Activated T-helper 2 cell treated with anti-CD3 and anti-CD28 coated beads, Interferon-gamma antibody, Interleukin-2, Interleukin-4, amounts not matched to agents 10 μg/mL and 5 μg/mL and 100 μg/mL, durations not matched to agents 14 hours and 24 hours and 36 hours (primary cell): ENCODE measurements at regions of chr14 and their contacts with region 1.

Region 1: GRCh38 chr14:55373784-55374705 is 37.6 kb downstream of the ATG14 start:
- DNase-seq: peak; percentile 22
- H3K4me3 Mint-ChIP-seq: peak overlapping the region; percentile 44
- H3K27ac Mint-ChIP-seq: peak overlapping the region; percentile 95
- H3K4me1 Mint-ChIP-seq: peaks cover 25% of the 10 kb centered on the region
- H3K27me3 Mint-ChIP-seq: no peaks in the 10 kb centered on the region

Region 2: DNA sequence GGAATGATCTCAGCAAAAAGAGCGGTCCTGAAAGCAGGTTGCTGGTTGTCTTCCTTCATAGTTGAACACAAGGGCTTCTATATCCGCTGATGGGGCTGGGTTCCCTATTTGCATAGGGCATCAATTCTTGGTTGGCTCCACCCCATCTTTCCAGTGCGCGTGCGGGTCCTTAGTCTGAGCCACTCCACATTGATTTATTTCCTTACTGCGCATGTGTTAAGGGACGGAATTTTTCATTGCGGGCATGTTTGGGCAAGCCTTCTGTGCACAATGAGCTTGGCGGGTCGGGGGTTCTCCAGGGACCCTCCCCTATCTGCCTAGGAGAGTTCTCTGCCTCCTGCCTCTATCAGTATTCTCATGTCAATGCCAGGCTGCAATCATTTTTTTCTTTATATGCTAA is 161.4 kb before region 1 on chr14:
- intact Hi-C with region 1: loop called (anchors 5 kb)
- DNase-seq: no peak
- H3K4me3 Mint-ChIP-seq: no peak overlapping the region
- H3K27ac Mint-ChIP-seq: no peak overlapping the region
- H3K4me1 Mint-ChIP-seq: peaks cover 5% of the 10 kb centered on the region
- H3K27me3 Mint-ChIP-seq: peaks cover 3% of the 10 kb centered on the region

Region 3: DNA sequence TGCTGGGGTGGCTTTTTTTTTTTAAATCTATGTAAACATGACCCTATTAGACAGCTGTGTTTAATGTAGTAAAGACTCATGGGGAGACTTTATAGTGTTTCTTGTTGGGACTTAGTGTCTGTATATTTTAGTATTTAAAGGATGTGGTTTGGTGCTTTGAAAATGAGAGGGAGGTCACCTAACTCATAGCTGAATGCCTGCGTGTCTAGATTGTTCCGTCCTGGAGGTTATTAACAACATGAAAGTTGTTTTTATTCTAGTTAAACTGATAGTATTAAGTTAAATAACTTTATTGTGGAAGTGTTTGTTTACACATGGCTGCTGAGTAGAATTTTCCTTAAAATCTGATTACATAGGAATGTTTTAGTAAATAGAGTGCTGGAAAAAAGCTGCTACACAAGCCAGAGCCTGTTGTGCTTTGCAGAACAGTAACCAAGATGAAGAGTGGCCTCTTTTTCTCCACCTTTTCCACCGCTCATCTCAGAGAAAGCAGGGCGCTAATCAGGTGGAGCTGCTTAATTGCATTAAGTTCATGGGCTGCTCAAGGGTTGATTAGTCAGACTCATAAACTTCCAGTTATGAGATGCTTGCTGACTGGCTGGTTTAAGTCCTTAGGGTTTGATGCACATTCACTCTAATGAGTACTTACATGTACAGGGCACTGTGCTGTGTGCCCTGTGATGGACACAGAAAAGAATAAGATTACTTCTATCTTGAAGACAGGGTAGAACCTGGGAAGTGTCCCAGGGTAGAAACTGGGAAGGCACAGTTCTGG is 40.1 kb before region 1 on chr14:
- intact Hi-C with region 1: loop called (anchors 1 kb)
- DNase-seq: no peak
- H3K4me3 Mint-ChIP-seq: peak overlapping the region; percentile 60
- H3K27ac Mint-ChIP-seq: peak overlapping the region; percentile 87
- H3K4me1 Mint-ChIP-seq: peaks cover 71% of the 10 kb centered on the region
- H3K27me3 Mint-ChIP-seq: no peaks in the 10 kb centered on the region

Region 4: DNA sequence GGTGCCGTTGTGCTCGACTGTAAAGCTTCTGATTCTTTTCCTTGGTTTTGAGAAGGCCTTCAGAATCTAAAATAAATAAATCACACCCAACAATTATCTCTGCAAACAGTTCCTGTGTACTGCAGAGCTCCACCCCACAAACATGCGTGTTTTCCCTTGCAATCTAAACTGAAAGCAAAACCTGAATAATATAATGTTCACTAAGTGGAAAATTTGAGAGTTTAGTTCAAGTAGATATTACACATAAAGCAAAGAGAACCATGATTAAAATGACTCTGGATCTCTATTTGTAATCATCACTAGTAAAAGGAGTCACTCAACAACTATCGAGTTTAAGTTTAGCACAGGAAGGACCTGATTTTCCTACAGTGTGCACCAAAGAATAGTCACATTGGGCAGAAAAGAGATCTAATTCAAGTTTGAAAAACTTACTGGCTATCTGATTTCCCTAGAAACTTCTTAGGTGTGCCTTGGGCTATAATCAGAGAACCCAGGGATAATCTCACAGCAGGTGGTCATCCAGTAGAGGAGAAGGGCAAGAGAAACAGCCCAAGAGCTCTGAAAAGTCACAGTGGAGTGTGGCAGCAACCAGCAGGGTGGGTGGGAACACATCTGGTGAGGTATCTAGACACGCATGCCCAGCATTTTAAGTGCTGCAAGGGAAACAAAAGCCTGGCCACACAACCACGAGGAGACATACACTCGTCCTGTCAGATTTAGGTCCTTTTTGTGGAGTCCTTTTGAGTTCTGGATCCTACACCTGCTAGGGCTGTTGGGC is 12.2 kb after region 1 on chr14:
- intact Hi-C with region 1: loop called (anchors 1 kb)
- DNase-seq: no peak
- H3K4me3 Mint-ChIP-seq: peak overlapping the region; percentile 11
- H3K27ac Mint-ChIP-seq: peak overlapping the region; percentile 88
- H3K4me1 Mint-ChIP-seq: peaks cover 44% of the 10 kb centered on the region
- H3K27me3 Mint-ChIP-seq: no peaks in the 10 kb centered on the region

Region 5: DNA sequence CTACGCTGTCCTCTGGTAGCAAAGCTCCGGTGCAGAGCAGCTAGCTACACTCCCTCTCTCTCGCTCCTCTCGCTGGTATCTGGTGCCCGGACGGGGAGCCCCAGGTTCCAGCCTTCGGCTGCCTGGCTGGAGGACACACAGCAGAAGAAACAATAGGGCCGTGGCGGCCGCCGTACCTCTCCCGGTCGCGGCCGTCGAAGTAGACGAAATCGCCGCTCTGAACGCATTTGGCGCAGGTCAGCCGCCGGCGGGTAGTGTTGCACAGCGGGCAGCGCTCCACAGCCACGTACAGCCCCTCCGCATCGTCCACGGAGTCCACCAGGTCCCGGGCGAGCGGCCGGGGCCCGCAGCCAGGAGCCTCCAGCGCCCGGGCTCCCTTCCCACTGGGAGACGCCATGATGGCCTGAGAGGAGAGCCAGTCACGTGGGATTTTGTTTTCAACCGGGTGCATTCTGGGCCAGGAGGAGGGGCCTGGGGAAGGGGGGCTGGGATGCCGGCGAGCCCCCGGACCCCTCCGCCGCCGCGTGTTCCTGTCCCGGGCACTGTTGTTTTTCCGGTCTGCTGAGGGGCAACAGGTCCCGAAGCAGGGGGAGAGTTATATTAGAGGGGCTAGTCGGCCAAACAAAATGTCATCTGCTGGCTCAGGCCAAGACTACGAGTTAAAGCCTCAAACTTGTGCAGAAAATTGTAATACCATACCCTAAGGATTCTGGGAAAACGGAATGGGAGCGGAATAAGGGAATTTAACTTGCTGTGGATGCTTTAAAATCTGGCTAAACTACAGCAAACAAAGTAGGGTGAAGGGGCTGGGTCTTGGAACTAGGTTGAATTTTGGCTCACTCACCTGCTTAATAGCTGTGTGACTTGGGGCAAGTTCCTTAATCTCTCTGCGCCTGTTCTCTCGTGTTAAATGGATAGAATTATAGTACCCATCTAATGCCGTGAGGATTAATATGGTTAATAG is 37.7 kb after region 1 on chr14 and contains the start of gene ATG14:
- intact Hi-C with region 1: loop called (anchors 5 kb)
- DNase-seq: peak; percentile 71
- H3K4me3 Mint-ChIP-seq: peak within 1 kb of the TSS; percentile 86
- H3K27ac Mint-ChIP-seq: peak within 1 kb of the TSS; percentile 88
- H3K4me1 Mint-ChIP-seq: peaks cover 31% of the 10 kb centered on the region
- H3K27me3 Mint-ChIP-seq: peaks cover 2% of the 10 kb centered on the region
- total RNA-seq, gene ATG14: 4.3 and 4.6 TPM in 2 replicates